Spleen (tissue), 13 donors: ENCODE measurements at regions of chr10 and their contacts with region 1.

Region 1: DNA sequence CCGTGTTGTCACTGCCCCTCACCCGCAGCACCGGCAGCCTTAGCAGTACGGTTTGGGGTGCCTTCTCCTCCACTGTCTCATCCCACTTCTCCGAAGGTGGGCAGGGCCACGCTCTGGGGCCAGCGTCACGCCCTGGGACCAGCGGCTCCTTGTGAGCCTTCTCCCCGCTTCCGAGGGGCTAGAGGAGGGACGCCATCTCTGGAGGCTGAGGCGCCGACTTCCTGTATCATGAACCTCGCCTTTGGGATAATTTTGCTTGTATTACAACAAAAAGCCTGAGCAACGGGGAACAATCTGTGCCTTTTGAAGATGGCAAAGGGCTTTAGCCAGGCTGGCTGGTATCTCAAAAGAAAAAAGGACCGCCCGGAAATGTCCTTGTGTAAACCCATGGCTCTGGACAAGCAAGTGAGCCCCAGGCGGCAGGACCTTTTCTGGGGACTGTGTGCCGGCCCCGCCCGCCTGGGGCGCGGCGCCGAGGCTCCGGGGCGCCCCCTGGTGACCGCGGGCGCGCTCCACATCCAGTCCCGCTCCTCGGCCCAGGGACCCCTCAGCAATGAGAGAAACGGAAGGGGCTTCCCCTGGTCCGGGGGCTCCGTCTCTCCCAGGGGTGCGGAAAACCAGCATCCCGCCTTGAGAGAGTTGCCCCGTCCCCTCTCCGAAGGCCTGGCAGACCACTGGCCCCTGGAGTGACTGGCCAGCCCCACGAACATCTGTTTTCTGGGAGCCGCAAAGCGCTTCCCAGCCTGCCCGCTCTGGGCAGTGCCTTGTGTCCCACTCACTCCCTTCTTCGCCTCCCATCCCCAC is 3.8 kb downstream of the DEPP1 start:
- DNase-seq: peak; percentile 94
- H3K4me3 ChIP-seq: peak overlapping the region; percentile 14 to 70 (median 34)
- H3K27ac ChIP-seq: peak overlapping the region; percentile 6 to 84 (median 74)
- H3K4me1 ChIP-seq: peaks cover 14 to 99% (median 54%) of the 10 kb centered on the region in 6 donors
- H3K27me3 ChIP-seq: no peaks in the 10 kb centered on the region
- CTCF ChIP-seq: peak; percentile 78 to 99 (median 97)
- POLR2A ChIP-seq: no peak

Region 2: DNA sequence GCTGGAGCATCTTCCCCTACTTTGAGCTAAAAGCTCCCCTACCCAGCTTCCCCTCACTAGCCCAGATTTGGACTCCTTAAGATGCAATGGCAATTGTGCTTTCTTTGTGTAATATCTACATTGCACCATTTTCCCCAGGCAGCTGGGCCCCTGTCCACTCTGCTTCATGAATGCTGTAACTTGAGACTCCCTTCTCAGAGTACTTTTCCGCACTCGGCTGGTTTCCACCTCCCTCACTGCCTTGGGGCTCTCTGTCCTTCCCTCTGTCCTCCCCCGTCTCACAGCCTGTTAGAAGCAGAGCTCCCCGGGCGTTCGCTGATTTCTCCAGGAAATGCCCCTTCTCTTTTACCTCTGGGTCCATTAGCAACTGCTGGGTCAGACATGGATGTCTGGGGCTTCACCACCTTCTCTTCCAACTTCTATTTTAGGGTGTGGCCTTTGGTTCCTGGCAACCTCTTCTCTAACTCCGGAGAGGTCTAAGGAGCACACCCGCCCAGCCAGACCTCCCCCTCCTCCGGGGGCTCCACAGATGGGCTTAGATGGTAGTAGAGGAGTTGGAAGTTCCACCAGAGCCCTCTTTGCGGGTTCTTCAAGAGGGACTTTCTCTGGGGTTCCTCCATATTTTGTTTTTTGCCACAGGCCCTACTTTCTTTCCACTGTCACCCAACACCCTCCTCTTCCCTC is 66.6 kb before region 1 on chr10:
- intact Hi-C with region 1: no loop called
- DNase-seq: no peak
- H3K4me3 ChIP-seq: no peak overlapping the region
- H3K27ac ChIP-seq: no peak overlapping the region
- H3K4me1 ChIP-seq: peaks cover 0 to 20% (median 4%) of the 10 kb centered on the region in 6 donors
- H3K27me3 ChIP-seq: no peaks in the 10 kb centered on the region
- CTCF ChIP-seq: no peak
- POLR2A ChIP-seq: no peak

Region 3: GRCh38 chr10:44932517-44933450 is 42.0 kb before region 1 on chr10:
- intact Hi-C with region 1: loop called (anchors 5 kb)
- DNase-seq: peak; percentile 97
- H3K4me3 ChIP-seq: no peak overlapping the region
- H3K27ac ChIP-seq: no peak overlapping the region
- H3K4me1 ChIP-seq: peaks cover 0 to 51% (median 25%) of the 10 kb centered on the region in 6 donors
- H3K27me3 ChIP-seq: no peaks in the 10 kb centered on the region
- CTCF ChIP-seq: peak; percentile 90 to 97 (median 96)
- POLR2A ChIP-seq: no peak